Activated CD4-positive, alpha-beta T cell treated with anti-CD3 and anti-CD28 coated beads for 36 hours (primary cell): ENCODE measurements at regions of chr2 and their contacts with region 1.

Region 1: DNA sequence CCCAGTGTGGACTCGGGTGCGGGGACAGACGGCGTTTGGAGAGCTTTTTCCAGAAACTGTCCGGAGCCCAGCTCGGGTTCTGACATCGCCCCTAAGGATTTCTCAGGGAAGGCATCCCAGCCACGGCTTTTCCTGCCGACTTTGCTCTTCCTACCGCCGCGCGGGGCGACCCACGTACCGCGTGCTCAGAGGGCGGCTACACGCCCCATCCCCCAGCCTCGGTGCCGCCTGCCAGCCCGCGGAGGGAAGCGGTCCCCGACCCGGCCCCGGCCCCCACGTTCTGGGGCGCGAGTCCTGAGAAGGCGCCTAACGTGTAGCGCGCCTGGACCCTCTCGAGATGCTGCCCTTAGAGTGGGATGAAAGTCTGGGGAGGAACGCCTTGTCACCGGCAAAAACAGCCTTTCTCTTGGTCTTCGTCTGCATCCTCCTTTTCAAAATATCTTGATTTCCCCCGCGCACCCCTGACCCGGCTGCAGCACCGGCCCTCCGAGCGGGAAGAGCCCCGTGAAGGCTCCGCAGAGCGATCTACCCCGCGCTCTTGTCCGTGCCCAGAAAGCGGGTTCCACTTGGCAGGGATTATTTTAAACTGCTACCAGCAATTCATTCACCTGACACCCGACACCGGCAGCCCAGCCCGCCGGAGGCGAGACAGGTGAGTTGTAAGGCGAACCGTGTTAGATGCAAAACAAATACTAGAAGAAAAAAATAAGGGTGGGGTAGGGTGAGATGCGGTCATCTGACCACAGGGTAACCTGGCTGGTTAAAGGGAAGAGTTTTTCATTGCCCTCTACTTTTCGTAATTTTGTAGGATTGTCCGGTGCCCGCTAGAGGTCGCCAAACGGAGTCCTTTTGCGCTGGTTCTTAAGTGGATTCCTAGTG is 812 bp upstream of the KCNG3 start:
- DNase-seq: peak; percentile 89
- ATAC-seq: peak; percentile 59
- H3K4me3 Mint-ChIP-seq: peak overlapping the region; percentile 80
- H3K27ac Mint-ChIP-seq: peak overlapping the region; percentile 81
- H3K4me1 Mint-ChIP-seq: peaks cover 17% of the 10 kb centered on the region
- H3K27me3 Mint-ChIP-seq: peaks cover 8% of the 10 kb centered on the region

Region 2: DNA sequence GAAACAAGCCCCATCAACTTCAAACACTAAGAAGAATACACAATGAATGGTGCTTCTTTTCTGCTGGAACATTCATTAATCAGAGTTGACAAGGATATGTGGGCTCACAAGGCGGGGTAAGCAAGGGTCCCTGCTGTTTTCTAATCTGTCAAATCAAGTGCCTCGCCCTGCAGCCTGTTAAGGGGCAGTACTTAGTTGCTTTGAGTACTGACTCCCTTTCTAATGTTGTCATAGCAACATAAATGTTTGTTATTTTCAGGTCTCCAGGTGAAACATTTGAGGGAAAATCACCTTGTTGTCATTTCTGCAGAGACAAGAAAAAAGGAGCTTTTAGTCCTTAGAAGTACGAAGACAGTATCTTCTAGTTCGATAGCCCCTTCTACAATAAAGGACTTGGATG is 731.5 kb before region 1 on chr2:
- CTCF ChIA-PET with region 1: no interaction called
- POLR2A ChIA-PET with region 1: no interaction called
- intact Hi-C with region 1: no loop called
- DNase-seq: no peak
- ATAC-seq: no peak
- H3K4me3 Mint-ChIP-seq: no peak overlapping the region
- H3K27ac Mint-ChIP-seq: no peak overlapping the region
- H3K4me1 Mint-ChIP-seq: no peaks in the 10 kb centered on the region
- H3K27me3 Mint-ChIP-seq: peaks cover 5% of the 10 kb centered on the region

Region 3: DNA sequence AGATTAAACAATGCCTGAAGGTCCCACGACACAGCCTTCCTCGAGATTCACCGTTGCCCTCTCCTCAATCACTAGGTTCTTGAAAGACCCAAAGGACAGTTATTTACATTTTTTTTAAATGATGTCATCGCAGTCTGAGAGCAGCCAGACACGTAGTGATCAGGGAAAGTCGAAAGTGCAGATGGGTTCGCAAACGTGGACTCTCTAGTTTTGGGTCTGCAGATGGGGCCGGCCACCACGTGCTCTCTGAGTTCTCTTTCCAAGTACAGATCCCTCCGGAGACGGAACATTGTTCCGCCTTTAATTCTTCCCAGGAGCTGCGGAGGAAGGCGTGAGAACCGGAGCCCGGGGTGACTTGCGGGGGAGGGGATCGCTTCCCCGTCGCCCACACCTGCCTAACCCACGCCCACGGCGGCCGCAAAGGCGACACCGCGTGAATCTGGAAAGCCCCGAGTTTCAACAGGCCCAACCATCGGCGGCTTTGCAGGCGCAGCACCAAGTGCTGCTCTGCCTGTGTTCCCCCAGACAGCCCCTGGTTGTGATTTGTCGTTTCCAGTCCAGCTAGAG is 392.5 kb before region 1 on chr2:
- CTCF ChIA-PET with region 1: no interaction called
- POLR2A ChIA-PET with region 1: no interaction called
- intact Hi-C with region 1: loop called in 1 of 2 experiments (anchors 5 kb)
- DNase-seq: peak; percentile 89
- ATAC-seq: peak; percentile 40
- H3K4me3 Mint-ChIP-seq: peak overlapping the region; percentile 69
- H3K27ac Mint-ChIP-seq: peak overlapping the region; percentile 94
- H3K4me1 Mint-ChIP-seq: peaks cover 38% of the 10 kb centered on the region
- H3K27me3 Mint-ChIP-seq: no peaks in the 10 kb centered on the region

Region 4: DNA sequence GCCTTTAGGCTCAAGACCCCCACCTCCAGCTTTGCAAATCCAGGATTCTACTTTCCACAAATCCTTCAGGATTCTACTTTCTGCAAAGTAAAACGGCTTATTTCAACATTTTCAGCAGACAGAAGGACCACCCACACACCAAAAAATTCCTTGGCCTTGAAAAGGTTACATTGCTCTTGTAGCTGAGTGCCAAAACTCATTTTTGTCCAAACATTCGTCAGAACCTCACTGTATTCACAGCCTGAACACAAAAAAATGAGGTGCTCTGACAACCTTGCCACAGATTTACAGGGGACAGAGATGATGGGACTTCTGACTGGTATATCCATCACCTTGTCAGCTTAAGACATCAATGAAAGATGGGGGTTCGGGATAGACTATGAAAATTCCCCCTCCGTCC is 70.6 kb before region 1 on chr2:
- CTCF ChIA-PET with region 1: no interaction called
- POLR2A ChIA-PET with region 1: no interaction called
- intact Hi-C with region 1: loop called in 1 of 2 experiments (anchors 2 kb)
- DNase-seq: no peak
- ATAC-seq: no peak
- H3K4me3 Mint-ChIP-seq: no peak overlapping the region
- H3K27ac Mint-ChIP-seq: no peak overlapping the region
- H3K4me1 Mint-ChIP-seq: peaks cover 21% of the 10 kb centered on the region
- H3K27me3 Mint-ChIP-seq: peaks cover 2% of the 10 kb centered on the region

Region 5: DNA sequence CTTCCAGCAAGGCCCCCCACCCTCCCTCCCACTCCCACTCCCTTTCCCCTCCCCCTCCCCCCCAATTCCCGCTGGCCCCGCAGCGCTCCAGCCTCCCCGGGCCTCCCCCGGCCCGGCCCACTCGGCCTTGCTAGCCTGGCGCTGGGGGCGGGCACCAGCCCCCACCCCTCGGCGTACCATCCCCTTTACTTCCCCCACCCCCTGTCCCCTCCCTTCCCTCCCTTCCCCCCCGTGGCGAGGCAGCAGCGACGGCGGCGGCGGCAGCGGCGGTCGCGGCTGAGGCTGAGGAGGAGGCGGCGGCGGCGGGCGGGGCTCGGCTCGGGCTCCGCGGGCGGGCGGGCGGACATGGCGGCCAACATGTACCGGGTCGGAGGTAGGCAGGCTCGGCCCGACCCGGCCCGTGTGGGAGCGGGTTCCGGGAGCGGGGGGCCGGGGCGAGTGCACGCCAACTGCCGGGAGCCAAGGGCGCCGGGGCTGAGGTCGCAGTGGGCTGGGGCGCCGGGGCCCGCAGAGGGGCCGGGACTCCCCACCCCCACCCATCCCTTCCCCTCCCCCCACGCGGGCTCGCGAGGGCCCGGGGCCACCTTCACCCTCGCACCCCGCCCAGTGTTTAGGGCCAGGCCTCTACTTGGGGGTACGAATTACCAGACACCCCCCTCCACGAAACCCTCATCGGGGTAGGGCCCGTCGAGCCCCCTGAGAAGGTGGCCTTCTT is 74.0 kb after region 1 on chr2 and contains the start of gene MTA3:
- CTCF ChIA-PET with region 1: no interaction called
- POLR2A ChIA-PET with region 1: no interaction called
- intact Hi-C with region 1: loop called in 1 of 2 experiments (anchors 1 kb)
- DNase-seq: peak; percentile 81
- ATAC-seq: peak; percentile 81
- H3K4me3 Mint-ChIP-seq: peak within 1 kb of the TSS; percentile 86
- H3K27ac Mint-ChIP-seq: peak within 1 kb of the TSS; percentile 91
- H3K4me1 Mint-ChIP-seq: peaks cover 32% of the 10 kb centered on the region
- H3K27me3 Mint-ChIP-seq: no peaks in the 10 kb centered on the region
- total RNA-seq, gene MTA3: 45.0 to 58.6 TPM

Region 6: GRCh38 chr2:42648796-42649195 is 154.2 kb after region 1 on chr2:
- CTCF ChIA-PET with region 1: interaction called, 3 read pairs
- POLR2A ChIA-PET with region 1: no interaction called
- intact Hi-C with region 1: loop called in 1 of 2 experiments (anchors 5 kb)
- DNase-seq: no peak
- ATAC-seq: no peak
- H3K4me3 Mint-ChIP-seq: no peak overlapping the region
- H3K27ac Mint-ChIP-seq: no peak overlapping the region
- H3K4me1 Mint-ChIP-seq: peaks cover 52% of the 10 kb centered on the region
- H3K27me3 Mint-ChIP-seq: no peaks in the 10 kb centered on the region

Region 7: DNA sequence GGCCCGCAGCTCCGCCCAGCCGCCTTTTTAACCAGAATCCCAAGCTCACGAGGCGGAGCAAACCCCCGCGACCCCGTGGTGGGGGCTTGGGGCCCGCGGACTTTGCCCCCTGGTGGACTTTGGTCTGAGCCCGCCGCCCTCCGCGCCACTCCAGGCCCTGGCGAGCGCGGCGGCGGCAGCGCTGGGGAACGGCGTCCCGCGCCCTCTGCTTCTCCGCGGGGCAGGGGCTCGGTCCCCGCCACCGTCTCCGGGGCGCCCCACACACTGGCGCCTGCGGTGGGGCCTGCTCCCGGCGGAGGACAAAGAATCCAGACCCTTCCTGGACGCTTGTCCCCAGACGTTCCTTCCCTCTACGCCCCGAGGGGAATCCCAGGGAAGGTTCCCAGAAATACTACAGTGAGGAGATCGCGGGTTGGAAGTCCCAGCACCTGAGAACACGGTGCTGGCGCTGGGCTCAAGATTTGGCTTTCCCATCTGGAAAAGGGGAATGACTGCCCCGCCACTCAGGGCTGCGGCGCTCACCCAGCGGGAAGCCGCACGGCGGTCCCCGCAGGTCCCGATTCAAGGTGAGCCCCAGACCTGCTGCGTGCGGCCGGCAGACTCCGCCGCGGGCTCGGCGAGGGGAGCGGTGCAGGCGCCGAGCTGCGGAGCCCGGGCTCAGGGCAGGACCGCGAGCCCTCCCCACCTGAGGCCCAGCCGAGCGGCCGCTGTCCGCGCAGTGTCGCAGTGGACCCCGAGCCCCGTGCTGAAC is 298.2 kb after region 1 on chr2 and contains the start of gene HAAO:
- CTCF ChIA-PET with region 1: no interaction called
- POLR2A ChIA-PET with region 1: no interaction called
- intact Hi-C with region 1: loop called in 1 of 2 experiments (anchors 2 kb)
- DNase-seq: peak; percentile 30
- ATAC-seq: peak; percentile 50
- H3K4me3 Mint-ChIP-seq: peak within 1 kb of the TSS; percentile 70
- H3K27ac Mint-ChIP-seq: peak within 1 kb of the TSS; percentile 66
- H3K4me1 Mint-ChIP-seq: peaks cover 37% of the 10 kb centered on the region
- H3K27me3 Mint-ChIP-seq: peaks cover 39% of the 10 kb centered on the region
- total RNA-seq, gene HAAO: 0.86 to 1.2 TPM

Region 8: DNA sequence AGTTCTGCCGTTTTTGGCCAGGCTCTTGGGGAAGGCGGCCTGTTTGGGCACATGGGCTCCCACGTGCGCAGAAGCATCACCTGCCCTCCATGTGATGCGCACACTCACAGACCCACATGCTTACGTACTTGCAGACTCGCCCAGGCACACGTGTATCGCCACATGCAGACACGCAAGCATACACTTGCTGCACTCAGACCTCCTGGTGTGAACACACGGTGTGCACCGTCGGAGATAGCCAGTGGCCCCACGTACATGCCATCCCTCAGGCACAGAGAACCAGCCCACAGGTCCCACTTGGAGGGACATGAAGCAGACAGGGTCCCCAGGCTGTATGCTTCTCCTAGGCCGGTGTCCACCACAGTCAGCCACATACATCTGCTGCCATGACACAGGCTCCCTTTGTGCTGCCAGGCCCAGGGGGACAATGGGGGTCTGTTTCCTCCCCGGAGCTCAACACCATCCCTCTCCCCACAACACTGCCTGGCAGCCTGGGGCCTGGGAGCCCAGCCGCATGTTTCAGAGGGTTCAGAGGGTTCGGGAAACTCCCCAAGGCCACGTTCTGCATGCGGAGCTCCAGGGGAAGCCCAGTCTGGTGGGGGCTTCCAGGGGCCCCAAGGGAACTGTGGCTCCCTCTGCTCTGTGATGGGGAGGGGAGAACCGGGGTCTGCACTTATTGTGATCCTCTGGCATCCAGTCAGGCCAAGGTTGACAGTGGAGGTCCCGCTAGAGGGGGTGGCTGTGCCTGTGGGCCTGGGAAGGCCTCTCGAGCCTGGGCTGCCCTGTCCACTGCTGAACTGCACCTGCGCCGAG is 505.9 kb after region 1 on chr2:
- CTCF ChIA-PET with region 1: no interaction called
- POLR2A ChIA-PET with region 1: no interaction called
- intact Hi-C with region 1: no loop called
- DNase-seq: no peak
- ATAC-seq: no peak
- H3K4me3 Mint-ChIP-seq: no peak overlapping the region
- H3K27ac Mint-ChIP-seq: no peak overlapping the region
- H3K4me1 Mint-ChIP-seq: no peaks in the 10 kb centered on the region
- H3K27me3 Mint-ChIP-seq: no peaks in the 10 kb centered on the region